CD8-positive, alpha-beta memory T cell (primary cell): ENCODE measurements at regions of chr10 and their contacts with region 1.

Region 1: DNA sequence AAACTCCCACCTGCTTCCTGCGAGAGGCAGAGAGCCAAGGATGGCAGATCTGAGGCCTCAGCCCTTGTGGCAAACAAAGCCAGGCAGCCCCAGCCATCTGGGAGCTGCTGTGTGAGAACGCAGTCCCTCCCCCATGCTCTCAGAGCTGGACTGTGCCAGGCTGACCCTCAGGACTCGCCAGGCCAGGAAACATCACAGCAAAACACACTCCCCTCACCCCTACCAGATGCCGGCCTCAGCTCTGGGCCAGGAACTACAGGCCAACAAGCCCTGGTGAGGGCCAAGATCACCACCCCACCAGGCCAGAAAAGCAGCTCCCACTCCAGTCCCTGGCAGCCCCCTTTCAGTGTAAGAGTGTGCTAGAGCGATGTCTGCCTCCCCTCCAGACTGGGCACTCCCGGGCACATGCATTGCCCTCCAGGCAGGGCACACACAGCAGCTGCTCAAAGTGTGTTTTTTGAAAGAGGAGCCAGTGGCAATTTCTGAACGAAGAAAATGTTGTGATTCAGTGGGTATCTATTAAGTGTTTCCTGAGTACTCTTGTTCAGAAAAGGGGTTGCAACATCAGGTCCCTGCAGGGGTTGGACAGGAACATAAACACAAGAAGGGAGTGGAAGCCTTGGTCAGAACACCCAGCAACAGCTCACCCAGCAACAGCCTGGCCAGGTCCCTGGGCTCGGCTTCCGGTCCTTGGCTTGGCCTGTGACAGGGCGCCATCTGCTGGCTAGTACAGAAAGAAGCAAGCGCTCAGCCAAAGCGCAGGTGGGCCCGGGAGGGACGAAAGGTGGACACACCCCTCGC is 18.3 kb downstream of the LRRC20 start:
- DNase-seq: peak; percentile 75 to 89 (median 76)
- H3K4me3 ChIP-seq: no peak overlapping the region
- H3K4me3 Mint-ChIP-seq: peak overlapping the region in 4 of 7 donors; percentile 32 to 59 (median 51)
- H3K27ac ChIP-seq: no peak overlapping the region
- H3K27ac Mint-ChIP-seq: peak overlapping the region in 4 of 8 donors; percentile 23 to 88 (median 60)
- H3K4me1 ChIP-seq: peaks cover 8% of the 10 kb centered on the region
- H3K4me1 Mint-ChIP-seq: peaks cover 8 to 11% (median 9%) of the 10 kb centered on the region in 3 donors
- H3K27me3 ChIP-seq: no peaks in the 10 kb centered on the region
- H3K27me3 Mint-ChIP-seq: no peaks in the 10 kb centered on the region

Region 2: GRCh38 chr10:70093335-70093944 is 270.7 kb before region 1 on chr10:
- CTCF ChIA-PET with region 1: interaction called, 12 read pairs
- POLR2A ChIA-PET with region 1: no interaction called
- DNase-seq: peak in 2 of 5 donors; percentile 47 to 52
- H3K4me3 ChIP-seq: peak overlapping the region; percentile 53
- H3K4me3 Mint-ChIP-seq: peak overlapping the region; percentile 74 to 97 (median 84)
- H3K27ac ChIP-seq: no peak overlapping the region
- H3K27ac Mint-ChIP-seq: peak overlapping the region; percentile 90 to 100 (median 96)
- H3K4me1 ChIP-seq: peaks cover 32% of the 10 kb centered on the region
- H3K4me1 Mint-ChIP-seq: peaks cover 42 to 63% (median 52%) of the 10 kb centered on the region in 3 donors
- H3K27me3 ChIP-seq: no peaks in the 10 kb centered on the region
- H3K27me3 Mint-ChIP-seq: no peaks in the 10 kb centered on the region

Region 3: DNA sequence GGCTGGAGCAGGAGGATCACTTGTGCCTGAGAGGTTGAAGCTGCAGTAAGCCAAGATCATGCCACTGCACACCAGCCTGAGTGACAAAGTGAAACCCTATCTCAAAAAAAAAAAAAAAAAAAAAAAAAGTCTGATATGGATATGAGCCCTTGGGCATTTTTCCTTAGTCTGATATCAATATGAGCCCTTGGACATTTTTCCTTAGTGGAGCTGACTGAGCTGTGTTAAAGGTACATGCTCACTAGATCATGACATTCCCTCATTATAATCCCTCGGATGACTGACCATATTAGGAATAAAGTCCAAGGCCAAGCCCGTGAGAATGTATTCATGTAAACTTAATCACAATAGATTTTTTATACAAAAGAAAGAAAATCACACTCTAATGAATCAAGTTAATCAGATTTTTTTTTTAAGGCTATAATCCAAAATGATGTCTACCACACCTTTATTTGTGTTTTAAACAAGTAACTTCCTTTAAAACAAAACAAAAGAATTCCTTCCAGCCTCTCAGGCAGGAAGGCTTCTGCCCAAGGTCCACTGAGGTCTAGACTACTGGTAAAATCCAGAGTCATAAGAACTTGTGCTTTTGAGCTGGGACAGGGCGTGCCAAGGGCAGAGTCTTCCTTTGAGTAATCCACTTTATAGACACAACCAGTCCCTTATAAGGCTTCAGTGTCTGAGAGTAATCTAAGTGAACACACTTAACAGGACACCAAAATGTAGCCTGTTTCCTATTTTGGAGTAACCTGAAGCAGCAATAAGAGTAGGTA is 136.4 kb before region 1 on chr10:
- CTCF ChIA-PET with region 1: interaction called, 304 read pairs
- POLR2A ChIA-PET with region 1: no interaction called
- DNase-seq: no peak
- H3K4me3 ChIP-seq: no peak overlapping the region
- H3K4me3 Mint-ChIP-seq: no peak overlapping the region
- H3K27ac ChIP-seq: no peak overlapping the region
- H3K27ac Mint-ChIP-seq: no peak overlapping the region
- H3K4me1 ChIP-seq: peaks cover 11% of the 10 kb centered on the region
- H3K4me1 Mint-ChIP-seq: peaks cover 15 to 37% (median 37%) of the 10 kb centered on the region in 3 donors
- H3K27me3 ChIP-seq: no peaks in the 10 kb centered on the region
- H3K27me3 Mint-ChIP-seq: no peaks in the 10 kb centered on the region

Region 4: GRCh38 chr10:70267161-70267933 is 96.8 kb before region 1 on chr10:
- CTCF ChIA-PET with region 1: interaction called, 24 read pairs
- POLR2A ChIA-PET with region 1: interaction called, 4 read pairs
- DNase-seq: no peak
- H3K4me3 ChIP-seq: no peak overlapping the region
- H3K4me3 Mint-ChIP-seq: no peak overlapping the region
- H3K27ac ChIP-seq: no peak overlapping the region
- H3K27ac Mint-ChIP-seq: peak overlapping the region in 1 of 8 donors; percentile 10
- H3K4me1 ChIP-seq: no peaks in the 10 kb centered on the region
- H3K4me1 Mint-ChIP-seq: peaks cover 0 to 1% (median 1%) of the 10 kb centered on the region in 3 donors
- H3K27me3 ChIP-seq: no peaks in the 10 kb centered on the region
- H3K27me3 Mint-ChIP-seq: peaks cover 9 to 14% of the 10 kb centered on the region in 2 donors

Region 5: GRCh38 chr10:70324339-70324861 is 39.8 kb before region 1 on chr10:
- CTCF ChIA-PET with region 1: interaction called, 16 read pairs
- POLR2A ChIA-PET with region 1: no interaction called
- DNase-seq: peak in 2 of 5 donors; percentile 13 to 21
- H3K4me3 ChIP-seq: no peak overlapping the region
- H3K4me3 Mint-ChIP-seq: peak overlapping the region in 4 of 7 donors; percentile 5 to 65 (median 31)
- H3K27ac ChIP-seq: peak overlapping the region; percentile 24
- H3K27ac Mint-ChIP-seq: peak overlapping the region in 6 of 8 donors; percentile 38 to 96 (median 90)
- H3K4me1 ChIP-seq: peaks cover 27% of the 10 kb centered on the region
- H3K4me1 Mint-ChIP-seq: peaks cover 19 to 42% (median 27%) of the 10 kb centered on the region in 3 donors
- H3K27me3 ChIP-seq: no peaks in the 10 kb centered on the region
- H3K27me3 Mint-ChIP-seq: no peaks in the 10 kb centered on the region

Region 6: DNA sequence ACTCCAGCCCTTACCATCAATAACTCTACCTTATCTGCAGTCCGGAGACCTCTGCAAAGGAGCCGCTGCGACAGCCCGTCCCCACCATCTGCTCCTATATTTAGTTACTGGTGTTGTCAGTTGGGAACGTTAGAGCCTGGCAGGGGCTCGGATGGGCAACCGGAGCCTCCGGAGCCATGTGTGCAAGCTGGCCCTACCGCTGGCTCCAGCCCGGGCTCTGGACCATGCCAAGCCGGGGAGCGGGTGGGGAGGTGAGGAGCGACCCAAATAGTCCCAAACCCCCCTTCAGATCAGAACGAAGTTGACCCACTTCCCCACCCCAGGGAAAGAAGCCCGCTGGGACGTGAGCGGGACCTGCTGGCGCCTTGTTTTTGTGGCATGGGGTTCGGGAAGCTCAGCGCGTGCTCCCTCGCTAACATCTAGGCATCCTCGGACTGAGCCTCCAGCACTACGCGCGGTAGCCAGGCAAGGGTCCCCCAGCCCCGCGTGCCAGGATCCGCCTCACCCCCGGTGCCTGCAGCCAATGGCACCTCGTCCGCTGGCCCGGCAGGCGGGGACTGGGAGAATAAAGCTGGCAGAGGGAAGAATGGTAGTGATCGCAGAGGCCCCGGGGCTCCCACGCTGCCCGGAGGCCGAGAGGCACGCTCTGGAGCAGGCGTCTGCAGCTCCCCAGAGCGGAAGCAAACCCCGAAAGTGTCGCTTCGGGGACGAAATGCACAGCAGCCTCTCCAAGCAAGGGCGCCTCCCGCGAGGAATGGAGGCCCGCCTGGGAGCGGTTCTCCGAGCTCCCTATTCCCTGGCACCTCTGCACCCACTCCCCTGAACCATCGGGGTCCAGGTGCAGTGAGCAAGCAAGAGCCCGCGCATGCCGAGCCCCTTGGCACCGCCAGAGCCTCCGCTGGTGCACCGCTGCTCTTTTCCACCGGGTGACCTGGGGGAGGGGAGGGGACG is 17.6 kb after region 1 on chr10:
- CTCF ChIA-PET with region 1: interaction called, 12 read pairs
- POLR2A ChIA-PET with region 1: no interaction called
- DNase-seq: no peak
- H3K4me3 ChIP-seq: peak overlapping the region; percentile 72
- H3K4me3 Mint-ChIP-seq: peak overlapping the region; percentile 87 to 97 (median 89)
- H3K27ac ChIP-seq: peak overlapping the region; percentile 28
- H3K27ac Mint-ChIP-seq: peak overlapping the region in 1 of 8 donors; percentile 31
- H3K4me1 ChIP-seq: peaks cover 6% of the 10 kb centered on the region
- H3K4me1 Mint-ChIP-seq: peaks cover 6 to 18% (median 10%) of the 10 kb centered on the region in 3 donors
- H3K27me3 ChIP-seq: no peaks in the 10 kb centered on the region
- H3K27me3 Mint-ChIP-seq: peaks cover 4 to 9% of the 10 kb centered on the region in 2 donors

Region 7: GRCh38 chr10:70418229-70418628 is 54.1 kb after region 1 on chr10:
- CTCF ChIA-PET with region 1: no interaction called
- POLR2A ChIA-PET with region 1: no interaction called
- DNase-seq: no peak
- H3K4me3 ChIP-seq: no peak overlapping the region
- H3K4me3 Mint-ChIP-seq: no peak overlapping the region
- H3K27ac ChIP-seq: no peak overlapping the region
- H3K27ac Mint-ChIP-seq: peak overlapping the region in 3 of 8 donors; percentile 7 to 61 (median 17)
- H3K4me1 ChIP-seq: peaks cover 11% of the 10 kb centered on the region
- H3K4me1 Mint-ChIP-seq: peaks cover 24 to 41% (median 41%) of the 10 kb centered on the region in 3 donors
- H3K27me3 ChIP-seq: no peaks in the 10 kb centered on the region
- H3K27me3 Mint-ChIP-seq: no peaks in the 10 kb centered on the region